Vagina (tissue), 2 donors: ENCODE measurements at regions of chr1 and their contacts with region 1.

Region 1: GRCh38 chr1:89483010-89483756 is 41.4 kb upstream of the LRRC8B start:
- DNase-seq: no peak
- H3K4me3 ChIP-seq: no peak overlapping the region
- H3K27ac ChIP-seq: no peak overlapping the region
- H3K4me1 ChIP-seq: no peaks in the 10 kb centered on the region
- H3K27me3 ChIP-seq: no peaks in the 10 kb centered on the region
- CTCF ChIP-seq: peak; percentile 50 to 75 (median 57)
- POLR2A ChIP-seq: no peak

Region 2: DNA sequence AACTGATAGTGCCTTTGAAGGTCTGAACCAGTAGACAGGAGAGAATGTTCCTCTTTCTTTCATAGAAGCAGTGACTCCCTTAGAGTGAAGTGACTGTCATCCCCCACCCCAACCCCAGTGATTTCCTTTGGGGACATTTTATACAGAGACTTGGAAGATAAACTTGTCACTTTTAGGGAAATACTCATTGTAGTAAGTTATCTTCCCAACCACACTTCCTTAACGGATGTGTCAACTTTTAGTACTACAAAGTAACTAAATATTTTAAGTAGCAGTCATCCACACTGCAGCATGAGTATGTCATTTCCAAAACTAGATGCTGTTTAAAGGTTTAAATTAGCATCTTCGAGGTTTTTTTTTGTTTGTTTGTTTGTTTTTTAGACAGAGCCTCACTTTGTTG is 55.2 kb after region 1 on chr1:
- intact Hi-C with region 1: no loop called
- DNase-seq: no peak
- H3K4me3 ChIP-seq: no peak overlapping the region
- H3K27ac ChIP-seq: no peak overlapping the region
- H3K4me1 ChIP-seq: no peaks in the 10 kb centered on the region
- H3K27me3 ChIP-seq: no peaks in the 10 kb centered on the region
- CTCF ChIP-seq: no peak
- POLR2A ChIP-seq: no peak

Region 3: DNA sequence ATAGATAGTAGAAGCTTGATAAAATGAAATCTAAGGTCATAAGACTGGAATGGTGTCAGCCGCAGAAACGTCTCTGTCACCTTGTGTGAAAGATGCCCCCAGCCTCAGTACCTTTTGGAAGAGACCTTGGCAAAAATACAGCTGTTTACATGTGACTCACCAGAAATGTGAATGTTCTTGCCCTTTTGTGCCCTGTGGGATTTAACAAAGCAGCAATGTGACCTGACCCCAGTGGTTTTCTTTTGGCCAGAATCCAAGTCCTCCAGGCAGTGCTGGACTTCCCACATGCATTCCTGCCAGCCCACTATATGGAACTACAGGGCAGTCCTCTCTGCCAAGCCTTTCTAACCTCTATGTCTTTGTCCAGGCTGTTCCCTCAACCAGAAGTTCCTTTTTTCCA is 122.5 kb after region 1 on chr1:
- intact Hi-C with region 1: loop called (anchors 10 kb)
- DNase-seq: no peak
- H3K4me3 ChIP-seq: no peak overlapping the region
- H3K27ac ChIP-seq: no peak overlapping the region
- H3K4me1 ChIP-seq: peaks cover 11% of the 10 kb centered on the region
- H3K27me3 ChIP-seq: no peaks in the 10 kb centered on the region
- CTCF ChIP-seq: no peak
- POLR2A ChIP-seq: no peak

Region 4: GRCh38 chr1:89757532-89757931 is 274.3 kb after region 1 on chr1:
- intact Hi-C with region 1: loop called (anchors 10 kb)
- DNase-seq: no peak
- H3K4me3 ChIP-seq: no peak overlapping the region
- H3K27ac ChIP-seq: no peak overlapping the region
- H3K4me1 ChIP-seq: peaks cover 2% of the 10 kb centered on the region
- H3K27me3 ChIP-seq: no peaks in the 10 kb centered on the region
- CTCF ChIP-seq: no peak
- POLR2A ChIP-seq: no peak